Activated CD8-positive, alpha-beta T cell treated with anti-CD3 and anti-CD28 coated beads, Interleukin-2, amount 10 ng/mL, durations not matched to agents 7 days and 5 days (primary cell): ENCODE measurements at regions of chr2 and their contacts with region 1.

Region 1: DNA sequence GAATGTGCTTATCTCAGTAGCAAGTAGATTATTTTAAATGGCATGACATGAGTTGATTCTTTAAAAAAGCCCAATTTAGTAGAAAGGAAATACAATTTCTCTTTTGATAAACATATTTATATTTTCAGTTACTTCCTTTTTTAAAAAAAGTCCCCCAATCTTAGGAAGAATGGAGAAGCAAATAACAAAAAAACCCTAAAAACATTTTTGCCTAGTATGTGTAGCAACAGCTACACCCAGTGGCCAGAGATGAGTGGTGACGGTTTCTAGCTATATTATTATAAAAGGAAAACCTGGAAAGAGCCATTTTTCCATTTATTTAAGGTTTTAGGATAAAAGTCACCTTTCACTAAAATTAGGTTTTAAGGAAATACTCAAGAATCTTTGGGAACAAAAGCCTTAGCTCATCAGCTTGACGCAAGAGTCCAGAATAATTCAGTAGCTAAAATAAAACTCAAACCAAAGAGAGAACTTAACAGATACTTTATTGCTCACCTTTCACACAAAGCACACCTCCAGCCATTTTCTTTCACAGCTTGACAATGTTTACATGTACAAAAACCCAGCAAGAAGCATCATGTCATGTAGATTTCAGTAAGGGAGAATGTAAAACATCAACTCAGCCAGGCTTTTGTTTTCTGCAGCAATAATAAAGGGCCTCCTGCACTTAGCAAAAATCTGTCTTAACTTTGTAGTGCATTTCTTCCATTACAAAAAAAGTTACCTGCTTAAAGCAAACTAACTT is 15.7 kb downstream of the FAM98A start:
- DNase-seq: peak; percentile 36
- ATAC-seq: no peak
- H3K4me3 Mint-ChIP-seq: no peak overlapping the region
- H3K27ac Mint-ChIP-seq: no peak overlapping the region
- H3K4me1 Mint-ChIP-seq: peaks cover 13% of the 10 kb centered on the region
- H3K27me3 Mint-ChIP-seq: no peaks in the 10 kb centered on the region

Region 2: DNA sequence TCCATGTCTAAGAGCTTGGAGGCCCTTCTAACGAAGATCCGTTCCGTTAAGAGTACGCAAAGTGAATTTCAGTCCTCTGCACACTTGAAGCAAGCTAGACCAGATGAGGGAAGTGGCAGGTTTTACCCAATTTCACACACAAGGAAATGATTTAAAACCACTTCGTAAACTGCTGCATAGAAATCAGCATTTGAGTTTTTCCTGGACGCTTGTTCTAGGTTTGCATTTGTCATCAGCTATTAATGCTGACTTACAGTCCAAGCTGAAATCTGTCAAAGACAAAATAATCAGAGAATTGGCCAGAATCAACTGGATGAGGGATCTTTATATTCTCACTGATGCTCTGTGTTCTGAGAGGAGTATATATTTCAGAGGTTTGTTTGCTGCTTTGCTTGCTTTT is 224.5 kb before region 1 on chr2:
- CTCF ChIA-PET with region 1: no interaction called
- POLR2A ChIA-PET with region 1: no interaction called
- DNase-seq: no peak
- ATAC-seq: no peak
- H3K4me3 Mint-ChIP-seq: no peak overlapping the region
- H3K27ac Mint-ChIP-seq: no peak overlapping the region
- H3K4me1 Mint-ChIP-seq: peaks cover 4% of the 10 kb centered on the region
- H3K27me3 Mint-ChIP-seq: no peaks in the 10 kb centered on the region

Region 3: GRCh38 chr2:33372940-33373553 is 210.3 kb before region 1 on chr2:
- CTCF ChIA-PET with region 1: interaction called, 14 read pairs
- POLR2A ChIA-PET with region 1: no interaction called
- DNase-seq: peak; percentile 56
- ATAC-seq: no peak
- H3K4me3 Mint-ChIP-seq: no peak overlapping the region
- H3K27ac Mint-ChIP-seq: no peak overlapping the region
- H3K4me1 Mint-ChIP-seq: no peaks in the 10 kb centered on the region
- H3K27me3 Mint-ChIP-seq: no peaks in the 10 kb centered on the region

Region 4: DNA sequence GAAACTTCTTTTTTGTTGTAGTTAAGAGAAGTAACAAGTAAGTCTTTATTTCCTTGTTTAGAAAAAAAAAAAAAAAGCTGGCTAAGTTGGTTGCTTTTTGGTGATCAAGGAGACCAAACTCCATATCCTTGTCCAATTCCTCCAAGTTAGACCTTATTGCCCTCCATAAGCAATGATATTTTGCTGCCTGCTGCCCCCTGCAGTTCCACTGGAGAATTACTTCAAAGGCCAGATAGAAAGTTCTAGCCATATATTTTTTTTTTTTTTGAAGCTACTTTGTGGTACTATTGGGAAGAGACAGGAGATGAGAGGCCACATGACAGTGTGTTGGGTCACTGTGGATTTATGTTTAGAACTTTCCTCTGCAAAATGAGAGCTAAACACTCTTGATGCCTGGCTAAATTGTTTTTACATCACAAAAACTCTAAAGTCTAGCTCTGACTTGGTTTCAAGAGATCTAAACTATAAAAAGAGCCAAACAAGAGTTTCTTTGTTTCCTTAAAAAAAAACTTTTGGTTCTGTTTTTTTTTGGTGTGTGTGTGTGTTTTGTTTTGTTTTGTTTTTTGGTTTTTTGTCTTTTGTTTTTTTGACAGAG is 187.6 kb before region 1 on chr2:
- CTCF ChIA-PET with region 1: interaction called, 10 read pairs
- POLR2A ChIA-PET with region 1: no interaction called
- DNase-seq: peak; percentile 66
- ATAC-seq: no peak
- H3K4me3 Mint-ChIP-seq: no peak overlapping the region
- H3K27ac Mint-ChIP-seq: no peak overlapping the region
- H3K4me1 Mint-ChIP-seq: no peaks in the 10 kb centered on the region
- H3K27me3 Mint-ChIP-seq: no peaks in the 10 kb centered on the region

Region 5: DNA sequence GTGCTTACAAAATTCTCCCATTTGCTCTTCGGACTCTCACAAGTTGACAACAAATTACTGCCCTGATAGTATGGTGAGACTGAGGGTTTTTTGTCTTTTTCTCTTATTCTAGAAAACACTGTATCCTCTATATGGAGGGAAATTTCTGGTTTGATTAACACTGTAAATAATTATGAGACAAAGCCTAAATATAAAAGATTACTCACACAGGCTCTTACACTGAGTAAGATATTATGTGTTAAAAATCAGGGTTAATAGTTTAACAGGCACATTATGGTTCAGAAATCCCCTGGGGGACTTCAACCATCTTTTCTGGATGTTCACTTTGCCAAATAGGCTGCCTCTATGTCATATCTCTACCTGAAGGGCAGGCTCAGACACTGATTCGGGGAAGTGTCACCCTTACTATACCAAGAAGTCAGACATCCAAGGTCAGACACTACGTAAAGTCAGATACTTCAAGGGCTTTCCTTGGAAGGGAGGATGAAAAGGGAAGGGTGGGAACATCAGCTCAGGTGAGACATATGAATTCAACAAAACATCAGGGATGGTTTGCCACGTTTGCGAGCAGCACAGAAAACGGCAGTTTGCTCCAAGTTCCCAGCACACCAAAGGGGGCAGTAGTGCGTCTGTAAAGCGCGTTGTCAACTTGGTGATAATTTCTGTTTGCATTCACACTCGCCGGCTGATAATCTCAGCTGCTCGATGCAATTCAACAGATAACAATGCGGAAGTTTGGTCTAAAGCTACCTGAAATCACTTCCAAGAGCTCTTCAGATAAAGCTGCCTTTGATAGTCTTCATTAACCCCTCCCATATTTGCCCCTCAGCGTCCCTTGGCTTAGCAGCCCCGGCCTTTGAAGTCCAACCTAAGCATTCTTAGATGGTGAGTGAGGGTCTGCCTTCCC is 107.9 kb before region 1 on chr2:
- CTCF ChIA-PET with region 1: interaction called, 69 read pairs
- POLR2A ChIA-PET with region 1: interaction called, 11 read pairs
- DNase-seq: peak; percentile 91
- ATAC-seq: peak; percentile 78
- H3K4me3 Mint-ChIP-seq: peak overlapping the region; percentile 80
- H3K27ac Mint-ChIP-seq: peak overlapping the region; percentile 98
- H3K4me1 Mint-ChIP-seq: peaks cover 22% of the 10 kb centered on the region
- H3K27me3 Mint-ChIP-seq: no peaks in the 10 kb centered on the region

Region 6: GRCh38 chr2:33599175-33599942 is 16.0 kb after region 1 on chr2 and contains the start of gene FAM98A:
- CTCF ChIA-PET with region 1: interaction called, 26 read pairs
- POLR2A ChIA-PET with region 1: interaction called, 3 read pairs
- DNase-seq: peak; percentile 99
- ATAC-seq: peak; percentile 94
- H3K4me3 Mint-ChIP-seq: peak within 1 kb of the TSS; percentile 98
- H3K27ac Mint-ChIP-seq: peak within 1 kb of the TSS; percentile 96
- H3K4me1 Mint-ChIP-seq: peaks cover 22% of the 10 kb centered on the region
- H3K27me3 Mint-ChIP-seq: no peaks in the 10 kb centered on the region
- total RNA-seq, gene FAM98A: 33.4 to 33.9 TPM